GM10248 (cell line): ENCODE measurements at regions of chr5 and their contacts with region 1.

Region 1: DNA sequence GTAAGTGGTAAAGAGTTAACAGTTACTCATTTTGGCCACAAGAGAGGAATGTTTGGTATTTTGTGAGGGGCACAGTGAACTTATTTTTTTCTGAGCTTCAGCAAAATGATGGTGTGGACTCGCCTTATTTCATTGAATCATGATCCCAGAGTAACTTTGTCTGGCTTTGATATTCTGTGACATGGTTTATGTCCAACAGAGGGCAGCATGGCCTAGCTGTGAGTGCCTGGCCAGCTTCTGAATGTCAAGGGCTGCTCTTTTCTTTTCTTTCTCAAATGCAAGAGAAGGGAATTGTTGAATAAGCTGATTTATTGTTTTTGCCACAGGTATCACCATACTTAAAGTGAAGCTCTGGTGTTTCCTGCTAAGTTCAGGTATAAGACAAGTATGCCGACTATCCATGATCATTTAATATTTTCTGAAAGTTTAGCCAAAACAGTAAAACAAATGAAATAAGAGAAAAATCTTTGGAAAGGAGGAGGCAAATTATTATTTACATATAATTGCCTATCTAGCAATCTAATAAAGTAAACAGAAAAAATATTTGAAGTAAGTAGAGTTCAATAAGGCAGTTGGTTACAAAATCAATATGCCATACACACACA is 31.7 kb downstream of the MRPL22 start:
- DNase-seq: no peak
- CTCF ChIP-seq: peak; percentile 37

Region 2: DNA sequence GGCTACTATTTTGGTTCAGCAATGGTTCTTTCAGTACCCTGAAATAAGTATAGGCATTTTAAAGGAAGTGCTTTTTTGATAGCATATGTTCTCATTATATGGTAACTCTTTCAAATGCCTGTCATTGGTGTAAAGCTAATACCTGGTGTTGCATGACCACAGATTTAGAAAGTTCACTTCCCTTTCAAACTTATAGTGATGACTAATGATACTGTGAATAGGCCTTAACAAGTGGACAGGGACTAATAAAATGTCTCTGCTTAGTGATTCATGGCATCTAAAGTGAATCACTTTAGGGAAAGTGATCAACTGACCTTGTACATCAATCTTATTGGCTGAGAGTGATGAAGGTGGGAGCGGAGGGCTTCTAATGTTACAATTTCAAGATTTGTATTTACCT is 10.1 kb before region 1 on chr5:
- CTCF ChIA-PET with region 1: interaction called, 11 read pairs
- POLR2A ChIA-PET with region 1: no interaction called
- DNase-seq: peak; percentile 57
- CTCF ChIP-seq: no peak

Region 3: DNA sequence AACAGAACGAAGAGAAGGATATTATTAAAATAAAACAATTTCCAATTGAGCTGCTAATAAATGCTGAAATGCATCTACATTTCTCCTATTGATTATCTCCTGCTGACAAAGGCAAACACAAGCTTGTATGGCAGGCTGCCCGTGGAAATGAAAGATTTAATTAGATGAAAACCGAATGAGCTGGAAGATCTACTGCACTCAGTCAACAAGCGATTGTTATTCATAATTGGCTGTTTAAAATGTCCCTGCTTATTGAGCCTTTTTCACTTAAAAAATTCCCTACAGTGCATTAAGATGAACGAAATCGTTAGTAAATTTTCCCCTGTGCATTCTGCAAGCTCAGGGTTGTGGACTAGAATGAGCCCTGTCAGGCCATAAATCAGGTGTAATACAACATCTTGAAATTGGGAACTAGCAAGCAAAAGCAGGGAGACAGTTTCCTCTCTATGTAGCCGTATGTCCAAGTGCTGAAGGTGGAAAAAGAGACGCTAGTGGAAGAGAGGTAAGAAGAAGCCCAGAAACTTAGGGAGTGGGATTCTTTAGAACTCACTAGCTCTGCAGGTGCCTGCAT is 12.5 kb after region 1 on chr5:
- CTCF ChIA-PET with region 1: interaction called, 10 read pairs
- POLR2A ChIA-PET with region 1: no interaction called
- DNase-seq: no peak
- CTCF ChIP-seq: no peak

Region 4: DNA sequence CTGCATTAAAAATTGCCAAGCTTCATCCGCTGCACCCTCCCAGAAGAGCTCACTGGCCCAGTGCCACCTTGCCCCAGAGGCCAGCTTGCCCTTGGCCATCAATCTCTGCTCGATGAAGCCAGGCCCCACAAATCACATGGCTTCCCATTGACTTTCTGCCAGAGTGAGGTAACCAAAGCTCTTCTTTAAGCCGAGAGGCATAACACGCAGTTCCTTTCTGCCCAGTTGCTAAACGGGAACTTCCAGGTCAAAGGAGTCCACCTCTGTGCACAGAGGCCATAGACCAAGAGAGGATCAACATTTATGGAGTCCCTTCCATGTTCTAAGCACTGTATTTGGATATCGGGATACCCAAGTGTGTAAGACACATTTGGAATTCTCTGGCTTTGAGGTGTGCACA is 249.8 kb after region 1 on chr5:
- CTCF ChIA-PET with region 1: no interaction called
- POLR2A ChIA-PET with region 1: no interaction called
- DNase-seq: no peak
- CTCF ChIP-seq: no peak